ENCODE measurements at regions of chr6 and their contacts with region 1.

Region 1: DNA sequence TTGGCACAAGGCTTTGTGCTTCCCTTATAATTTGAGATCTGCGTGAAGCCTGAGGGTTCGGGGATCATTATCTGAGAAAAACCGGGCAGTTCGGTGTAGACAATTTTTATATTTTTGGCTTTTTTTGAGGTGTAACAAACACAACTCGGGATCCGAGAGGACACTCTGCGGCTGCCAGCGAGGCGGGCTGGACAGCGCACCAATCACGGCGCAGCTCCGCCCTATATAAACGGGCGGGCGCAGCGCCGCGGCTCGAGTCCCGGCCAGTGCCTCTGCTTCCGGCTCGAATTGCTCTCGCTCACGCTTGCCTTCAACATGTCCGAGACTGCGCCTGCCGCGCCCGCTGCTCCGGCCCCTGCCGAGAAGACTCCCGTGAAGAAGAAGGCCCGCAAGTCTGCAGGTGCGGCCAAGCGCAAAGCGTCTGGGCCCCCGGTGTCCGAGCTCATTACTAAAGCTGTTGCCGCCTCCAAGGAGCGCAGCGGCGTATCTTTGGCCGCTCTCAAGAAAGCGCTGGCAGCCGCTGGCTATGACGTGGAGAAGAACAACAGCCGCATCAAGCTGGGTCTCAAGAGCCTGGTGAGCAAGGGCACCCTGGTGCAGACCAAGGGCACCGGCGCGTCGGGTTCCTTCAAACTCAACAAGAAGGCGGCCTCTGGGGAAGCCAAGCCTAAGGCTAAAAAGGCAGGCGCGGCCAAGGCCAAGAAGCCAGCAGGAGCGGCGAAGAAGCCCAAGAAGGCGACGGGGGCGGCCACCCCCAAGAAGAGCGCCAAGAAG is 69.0 kb downstream of the HFE start:
- DNase-seq: peak; percentile 98
- H3K4me3 ChIP-seq: peak overlapping the region; percentile 66 to 86 (median 69)
- H3K27ac ChIP-seq: peak overlapping the region; percentile 94 to 100 (median 98)
- H3K4me1 ChIP-seq: peaks cover 0 to 22% (median 9%) of the 10 kb centered on the region in 4 donors
- H3K27me3 ChIP-seq: no peaks in the 10 kb centered on the region
- CTCF ChIP-seq: no peak
- EP300 ChIP-seq: peak in 2 of 4 donors; percentile 25 to 57
- POLR2A ChIP-seq: peak; percentile 99 to 100

Region 2: GRCh38 chr6:26025894-26026832 is 130.1 kb before region 1 on chr6:
- intact Hi-C with region 1: loop called (anchors 1 kb)
- DNase-seq: peak; percentile 99
- H3K4me3 ChIP-seq: peak overlapping the region; percentile 53 to 76 (median 61)
- H3K27ac ChIP-seq: peak overlapping the region; percentile 90 to 99 (median 95)
- H3K4me1 ChIP-seq: peaks cover 0 to 31% (median 19%) of the 10 kb centered on the region in 4 donors
- H3K27me3 ChIP-seq: no peaks in the 10 kb centered on the region
- CTCF ChIP-seq: peak in 3 of 4 experiments; percentile 75 to 93 (median 77)
- EP300 ChIP-seq: peak in 2 of 4 donors; percentile 62 to 73
- POLR2A ChIP-seq: peak; percentile 46 to 53

Region 3: GRCh38 chr6:26103770-26104456 is 52.4 kb before region 1 on chr6:
- intact Hi-C with region 1: loop called (anchors 10 kb)
- DNase-seq: peak; percentile 97
- H3K4me3 ChIP-seq: peak overlapping the region; percentile 34 to 58 (median 52)
- H3K27ac ChIP-seq: peak overlapping the region; percentile 82 to 92 (median 90)
- H3K4me1 ChIP-seq: peaks cover 0 to 12% (median 11%) of the 10 kb centered on the region in 4 donors
- H3K27me3 ChIP-seq: no peaks in the 10 kb centered on the region
- CTCF ChIP-seq: peak; percentile 38 to 49 (median 42)
- EP300 ChIP-seq: peak in 2 of 4 donors; percentile 19 to 63
- POLR2A ChIP-seq: peak; percentile 97 to 99

Region 4: DNA sequence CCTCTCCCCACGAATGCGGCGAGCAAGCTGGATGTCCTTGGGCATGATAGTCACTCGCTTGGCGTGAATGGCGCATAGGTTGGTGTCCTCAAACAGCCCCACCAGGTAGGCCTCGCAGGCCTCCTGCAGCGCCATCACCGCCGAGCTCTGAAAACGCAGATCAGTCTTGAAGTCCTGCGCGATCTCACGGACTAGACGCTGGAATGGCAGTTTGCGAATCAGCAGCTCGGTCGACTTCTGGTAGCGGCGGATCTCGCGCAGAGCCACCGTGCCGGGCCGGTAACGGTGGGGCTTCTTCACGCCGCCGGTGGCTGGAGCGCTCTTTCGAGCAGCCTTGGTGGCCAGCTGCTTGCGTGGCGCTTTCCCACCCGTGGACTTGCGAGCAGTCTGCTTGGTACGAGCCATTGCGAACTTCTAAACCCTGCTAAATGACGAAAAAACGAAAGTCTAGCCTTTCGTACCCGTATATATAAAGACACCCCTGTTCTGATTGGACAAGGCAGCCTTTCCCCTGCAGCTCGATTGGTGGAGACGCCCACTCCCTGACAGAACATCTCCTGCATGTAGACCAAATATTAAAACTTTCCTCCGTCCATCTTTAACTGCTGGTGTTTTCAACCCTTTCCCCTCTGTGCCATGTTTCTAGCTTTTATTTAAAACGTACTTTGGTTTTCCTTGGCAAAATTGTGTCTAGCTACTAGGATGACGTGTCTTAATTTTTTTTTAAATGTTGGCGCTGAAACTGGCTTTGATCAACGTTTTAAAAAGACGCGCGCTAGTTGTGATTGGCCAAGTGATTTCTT is 40.8 kb after region 1 on chr6:
- intact Hi-C with region 1: loop called (anchors 2 kb)
- DNase-seq: peak; percentile 95
- H3K4me3 ChIP-seq: peak overlapping the region; percentile 49 to 68 (median 58)
- H3K27ac ChIP-seq: peak overlapping the region; percentile 88 to 97 (median 96)
- H3K4me1 ChIP-seq: peaks cover 0 to 23% (median 21%) of the 10 kb centered on the region in 4 donors
- H3K27me3 ChIP-seq: no peaks in the 10 kb centered on the region
- CTCF ChIP-seq: no peak
- EP300 ChIP-seq: no peak
- POLR2A ChIP-seq: peak; percentile 81 to 84

Region 5: GRCh38 chr6:26216356-26216885 is 60.2 kb after region 1 on chr6:
- intact Hi-C with region 1: loop called (anchors 5 kb)
- DNase-seq: peak; percentile 93
- H3K4me3 ChIP-seq: peak overlapping the region; percentile 46 to 59 (median 50)
- H3K27ac ChIP-seq: peak overlapping the region; percentile 88 to 97 (median 94)
- H3K4me1 ChIP-seq: peaks cover 0 to 26% (median 23%) of the 10 kb centered on the region in 4 donors
- H3K27me3 ChIP-seq: no peaks in the 10 kb centered on the region
- CTCF ChIP-seq: no peak
- EP300 ChIP-seq: peak in 2 of 4 donors; percentile 41 to 86
- POLR2A ChIP-seq: peak; percentile 97 to 99

Region 6: GRCh38 chr6:27472617-27473400 is 1316.5 kb after region 1 on chr6 and contains the start of gene ZNF184:
- intact Hi-C with region 1: loop called (anchors 10 kb)
- DNase-seq: peak; percentile 98
- H3K4me3 ChIP-seq: peak within 1 kb of the TSS; percentile 54 to 86 (median 84)
- H3K27ac ChIP-seq: peak within 1 kb of the TSS; percentile 89 to 92 (median 90)
- H3K4me1 ChIP-seq: peaks cover 0 to 23% (median 20%) of the 10 kb centered on the region in 4 donors
- H3K27me3 ChIP-seq: no peaks in the 10 kb centered on the region
- CTCF ChIP-seq: peak in 1 of 4 experiments; percentile 31
- EP300 ChIP-seq: peak in 2 of 4 donors; percentile 8 to 57
- POLR2A ChIP-seq: peak; percentile 66 to 75
- total RNA-seq, gene ZNF184: 4.3 to 8.6 (median 7.3) TPM